CD8-positive, alpha-beta T cell (primary cell): ENCODE measurements at regions of chr4 and their contacts with region 1.

Region 1: DNA sequence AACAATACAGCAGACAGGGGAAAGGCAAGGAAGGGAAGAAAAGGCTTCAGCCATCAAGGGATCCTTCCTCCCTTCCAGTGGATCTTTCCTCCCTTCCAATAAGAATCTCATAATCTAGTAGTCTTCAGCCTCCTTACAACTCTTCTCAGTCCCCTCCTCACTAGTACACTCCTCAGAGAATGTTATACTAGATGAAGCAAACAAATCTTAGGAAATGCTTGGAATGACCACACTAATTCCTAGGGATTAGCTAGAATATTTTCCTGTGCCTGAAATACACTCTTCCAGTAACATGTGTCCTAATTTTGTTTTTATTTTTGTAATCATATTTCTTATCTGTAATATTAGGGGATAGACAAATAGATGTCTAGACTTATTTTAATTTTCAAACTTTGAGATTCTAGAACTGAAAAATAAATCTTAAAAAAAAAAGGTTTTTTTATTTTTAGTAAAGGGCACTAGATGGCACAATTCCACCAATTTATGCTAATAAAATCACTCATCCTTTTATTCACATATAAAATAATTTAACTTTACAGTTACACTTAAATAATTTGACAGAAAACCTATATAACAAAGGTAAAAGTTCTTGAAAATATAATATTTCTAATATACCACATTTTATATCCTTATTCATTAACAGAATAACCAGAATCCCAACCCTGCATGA is 7.0 kb upstream of the STPG2 start:
- DNase-seq: peak in 2 of 9 experiments; percentile 9 to 29
- ATAC-seq: no peak
- H3K4me3 ChIP-seq: no peak overlapping the region
- H3K4me3 Mint-ChIP-seq: no peak overlapping the region
- H3K27ac ChIP-seq: no peak overlapping the region
- H3K27ac Mint-ChIP-seq: no peak overlapping the region
- H3K4me1 ChIP-seq: no peaks in the 10 kb centered on the region
- H3K4me1 Mint-ChIP-seq: peaks cover 11% of the 10 kb centered on the region
- H3K27me3 ChIP-seq: peaks cover 0 to 2% of the 10 kb centered on the region in 2 experiments
- H3K27me3 Mint-ChIP-seq: peaks cover 2% of the 10 kb centered on the region
- CTCF ChIP-seq: peak; percentile 44

Region 2: DNA sequence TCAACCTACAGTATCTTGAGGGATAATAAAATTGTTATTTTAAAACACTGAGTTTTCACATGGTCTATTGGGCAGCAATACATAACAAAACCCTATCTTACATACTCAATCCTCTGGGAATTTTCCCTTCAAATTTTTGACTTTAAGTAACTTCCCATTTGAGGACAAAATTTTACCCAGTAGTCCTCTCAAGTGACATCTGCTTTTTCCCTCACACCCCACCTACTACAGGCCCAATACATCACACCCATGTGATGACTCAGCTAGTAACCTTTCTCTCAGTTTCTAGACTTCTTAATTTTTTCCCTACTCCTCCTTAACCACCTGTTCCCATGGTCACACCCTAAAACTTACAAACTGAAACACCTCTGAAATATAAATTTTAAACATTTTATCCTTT is 98.7 kb after region 1 on chr4:
- CTCF ChIA-PET with region 1: no interaction called
- POLR2A ChIA-PET with region 1: no interaction called
- intact Hi-C with region 1: loop called in 1 of 2 experiments (anchors 10 kb)
- DNase-seq: no peak
- ATAC-seq: no peak
- H3K4me3 ChIP-seq: no peak overlapping the region
- H3K4me3 Mint-ChIP-seq: no peak overlapping the region
- H3K27ac ChIP-seq: no peak overlapping the region
- H3K27ac Mint-ChIP-seq: no peak overlapping the region
- H3K4me1 ChIP-seq: no peaks in the 10 kb centered on the region
- H3K4me1 Mint-ChIP-seq: no peaks in the 10 kb centered on the region
- H3K27me3 ChIP-seq: no peaks in the 10 kb centered on the region
- H3K27me3 Mint-ChIP-seq: peaks cover 10% of the 10 kb centered on the region
- CTCF ChIP-seq: no peak

Region 3: GRCh38 chr4:98446499-98447375 is 296.5 kb after region 1 on chr4:
- CTCF ChIA-PET with region 1: no interaction called
- POLR2A ChIA-PET with region 1: no interaction called
- intact Hi-C with region 1: loop called in 1 of 2 experiments (anchors 5 kb)
- DNase-seq: peak; percentile 18 to 88 (median 65)
- ATAC-seq: peak; percentile 87
- H3K4me3 ChIP-seq: peak overlapping the region; percentile 9 to 16
- H3K4me3 Mint-ChIP-seq: peak overlapping the region; percentile 68
- H3K27ac ChIP-seq: peak overlapping the region in 1 of 2 experiments; percentile 68
- H3K27ac Mint-ChIP-seq: peak overlapping the region; percentile 90
- H3K4me1 ChIP-seq: peaks cover 35% of the 10 kb centered on the region
- H3K4me1 Mint-ChIP-seq: peaks cover 38% of the 10 kb centered on the region
- H3K27me3 ChIP-seq: no peaks in the 10 kb centered on the region
- H3K27me3 Mint-ChIP-seq: no peaks in the 10 kb centered on the region
- CTCF ChIP-seq: no peak

Region 4: DNA sequence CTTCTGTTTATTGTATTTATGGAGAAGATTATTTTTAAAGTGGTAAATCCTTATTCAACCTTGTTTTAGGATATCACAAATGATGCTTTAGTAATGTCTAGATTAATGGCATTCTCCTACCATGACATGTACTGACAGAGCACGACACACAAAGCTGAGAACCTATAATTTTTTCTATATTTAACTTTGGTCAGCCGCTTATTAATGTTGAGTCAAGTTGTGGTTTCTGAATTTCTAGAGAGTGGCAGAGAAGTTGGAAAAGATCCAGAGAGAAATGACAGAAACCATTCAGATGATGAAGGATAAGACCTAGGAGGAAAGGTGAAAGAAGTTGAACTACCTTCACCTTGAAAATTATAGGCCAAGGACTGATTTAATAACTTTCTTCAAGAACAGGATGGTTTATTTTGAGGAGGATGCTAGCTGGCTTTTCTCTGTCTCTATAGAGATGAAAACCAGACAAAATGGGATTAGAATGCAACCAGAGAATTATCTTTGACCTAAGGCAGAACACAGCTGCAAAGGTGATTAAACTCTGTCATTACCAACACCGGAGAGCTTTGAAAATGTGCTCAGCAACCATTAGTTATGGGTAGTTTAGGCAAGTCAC is 570.7 kb after region 1 on chr4:
- CTCF ChIA-PET with region 1: no interaction called
- POLR2A ChIA-PET with region 1: no interaction called
- intact Hi-C with region 1: no loop called
- DNase-seq: no peak
- ATAC-seq: no peak
- H3K4me3 ChIP-seq: no peak overlapping the region
- H3K4me3 Mint-ChIP-seq: no peak overlapping the region
- H3K27ac ChIP-seq: no peak overlapping the region
- H3K27ac Mint-ChIP-seq: no peak overlapping the region
- H3K4me1 ChIP-seq: no peaks in the 10 kb centered on the region
- H3K4me1 Mint-ChIP-seq: no peaks in the 10 kb centered on the region
- H3K27me3 ChIP-seq: no peaks in the 10 kb centered on the region
- H3K27me3 Mint-ChIP-seq: no peaks in the 10 kb centered on the region
- CTCF ChIP-seq: no peak

Region 5: GRCh38 chr4:99054428-99054994 is 904.3 kb after region 1 on chr4:
- CTCF ChIA-PET with region 1: interaction called, 7 read pairs
- POLR2A ChIA-PET with region 1: interaction called, 3 read pairs
- intact Hi-C with region 1: loop called (anchors 1 to 2 kb)
- DNase-seq: no peak
- ATAC-seq: no peak
- H3K4me3 ChIP-seq: no peak overlapping the region
- H3K4me3 Mint-ChIP-seq: no peak overlapping the region
- H3K27ac ChIP-seq: peak overlapping the region in 1 of 2 experiments; percentile 15
- H3K27ac Mint-ChIP-seq: peak overlapping the region; percentile 42
- H3K4me1 ChIP-seq: peaks cover 3% of the 10 kb centered on the region
- H3K4me1 Mint-ChIP-seq: peaks cover 7% of the 10 kb centered on the region
- H3K27me3 ChIP-seq: no peaks in the 10 kb centered on the region
- H3K27me3 Mint-ChIP-seq: no peaks in the 10 kb centered on the region
- CTCF ChIP-seq: no peak

Region 6: GRCh38 chr4:99462875-99463464 is 1312.7 kb after region 1 on chr4:
- CTCF ChIA-PET with region 1: interaction called, 3 read pairs
- POLR2A ChIA-PET with region 1: no interaction called
- intact Hi-C with region 1: loop called (anchors 5 kb)
- DNase-seq: peak; percentile 3 to 64 (median 38)
- ATAC-seq: peak; percentile 67
- H3K4me3 ChIP-seq: no peak overlapping the region
- H3K4me3 Mint-ChIP-seq: no peak overlapping the region
- H3K27ac ChIP-seq: no peak overlapping the region
- H3K27ac Mint-ChIP-seq: no peak overlapping the region
- H3K4me1 ChIP-seq: no peaks in the 10 kb centered on the region
- H3K4me1 Mint-ChIP-seq: no peaks in the 10 kb centered on the region
- H3K27me3 ChIP-seq: peaks cover 0 to 2% of the 10 kb centered on the region in 2 experiments
- H3K27me3 Mint-ChIP-seq: peaks cover 13% of the 10 kb centered on the region
- CTCF ChIP-seq: peak; percentile 75